PC-9 (cell line): ENCODE measurements at regions of chr21 and their contacts with region 1.

Region 1: DNA sequence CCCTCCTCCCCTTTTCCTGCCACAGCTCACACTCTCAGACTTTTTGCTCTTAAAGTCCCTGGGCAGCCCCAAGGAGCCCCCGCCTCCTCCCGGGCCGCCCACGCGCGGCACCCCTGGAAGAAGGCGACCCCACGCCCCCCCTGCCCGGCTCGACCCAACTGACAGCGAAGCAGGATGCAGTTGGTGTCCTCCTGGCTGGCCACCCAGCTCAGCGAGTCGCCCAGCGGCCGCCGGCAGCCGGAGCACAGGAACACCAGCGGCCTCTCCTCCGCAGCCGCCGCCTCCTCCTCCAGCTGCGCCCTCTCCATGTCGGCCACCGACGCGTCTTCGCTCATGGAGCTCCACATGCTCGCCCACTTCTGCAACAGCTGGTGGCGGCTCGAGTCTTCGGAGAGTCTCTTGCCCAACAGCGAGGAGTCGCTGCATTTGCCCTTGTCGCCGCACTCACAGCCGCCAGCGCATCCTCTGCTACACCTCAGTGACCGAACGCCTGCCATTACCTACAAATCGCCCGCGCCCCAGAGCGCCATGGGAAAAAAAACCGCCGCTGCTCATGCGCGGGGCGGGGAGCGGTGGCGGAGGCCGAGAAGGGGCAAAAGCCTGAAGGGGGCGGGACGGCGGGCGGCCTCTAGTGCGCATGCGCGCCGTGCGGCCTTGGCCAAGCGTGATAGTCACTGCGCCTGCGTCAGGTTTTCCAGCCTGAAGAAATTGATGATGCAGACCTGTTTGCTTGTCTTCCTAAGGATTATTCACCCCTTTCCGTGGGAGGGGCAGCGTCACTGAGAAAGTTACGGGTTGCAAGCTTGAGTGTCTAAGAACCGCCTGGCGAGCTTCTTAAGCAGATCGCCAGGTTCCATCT is at the start of gene MIS18A:
- DNase-seq: peak; percentile 86 to 93
- H3K4me3 ChIP-seq: peak within 1 kb of the TSS; percentile 67
- H3K27ac ChIP-seq: no peak within 1 kb of the TSS
- H3K4me1 ChIP-seq: peaks cover 9% of the 10 kb centered on the region
- H3K27me3 ChIP-seq: no peaks in the 10 kb centered on the region
- CTCF ChIP-seq: no peak
- total RNA-seq, gene MIS18A: 17.5 and 18.8 TPM in 2 replicates

Region 2: GRCh38 chr21:32392880-32393676 is 114.3 kb after region 1 on chr21 and contains the start of gene URB1:
- CTCF ChIA-PET with region 1: no interaction called
- POLR2A ChIA-PET with region 1: no interaction called
- intact Hi-C with region 1: no loop called
- DNase-seq: peak; percentile 69 to 92
- H3K4me3 ChIP-seq: peak within 1 kb of the TSS; percentile 91
- H3K27ac ChIP-seq: peak within 1 kb of the TSS; percentile 80
- H3K4me1 ChIP-seq: peaks cover 19% of the 10 kb centered on the region
- H3K27me3 ChIP-seq: no peaks in the 10 kb centered on the region
- CTCF ChIP-seq: no peak
- total RNA-seq, gene URB1: 11.0 TPM in 2 replicates

Region 3: GRCh38 chr21:32604464-32604863 is 325.7 kb after region 1 on chr21:
- CTCF ChIA-PET with region 1: no interaction called
- POLR2A ChIA-PET with region 1: no interaction called
- intact Hi-C with region 1: loop called (anchors 5 kb)
- DNase-seq: no peak
- H3K4me3 ChIP-seq: no peak overlapping the region
- H3K27ac ChIP-seq: no peak overlapping the region
- H3K4me1 ChIP-seq: no peaks in the 10 kb centered on the region
- H3K27me3 ChIP-seq: no peaks in the 10 kb centered on the region
- CTCF ChIP-seq: no peak